CD8-positive, alpha-beta T cell (primary cell): ENCODE measurements at regions of chr19 and their contacts with region 1.

Region 1: GRCh38 chr19:40744554-40745401 is 5.5 kb downstream of the ACTMAP start:
- DNase-seq: peak in 6 of 9 experiments; percentile 30 to 60 (median 47)
- ATAC-seq: peak; percentile 49
- H3K4me3 ChIP-seq: no peak overlapping the region
- H3K4me3 Mint-ChIP-seq: no peak overlapping the region
- H3K27ac ChIP-seq: no peak overlapping the region
- H3K27ac Mint-ChIP-seq: no peak overlapping the region
- H3K4me1 ChIP-seq: peaks cover 4% of the 10 kb centered on the region
- H3K4me1 Mint-ChIP-seq: peaks cover 7% of the 10 kb centered on the region
- H3K27me3 ChIP-seq: no peaks in the 10 kb centered on the region
- H3K27me3 Mint-ChIP-seq: no peaks in the 10 kb centered on the region
- CTCF ChIP-seq: no peak

Region 2: GRCh38 chr19:40813182-40813958 is 68.6 kb after region 1 on chr19:
- CTCF ChIA-PET with region 1: interaction called, 14 read pairs
- POLR2A ChIA-PET with region 1: no interaction called
- intact Hi-C with region 1: no loop called
- DNase-seq: no peak
- ATAC-seq: no peak
- H3K4me3 ChIP-seq: no peak overlapping the region
- H3K4me3 Mint-ChIP-seq: no peak overlapping the region
- H3K27ac ChIP-seq: no peak overlapping the region
- H3K27ac Mint-ChIP-seq: peak overlapping the region; percentile 49
- H3K4me1 ChIP-seq: peaks cover 35% of the 10 kb centered on the region
- H3K4me1 Mint-ChIP-seq: peaks cover 38% of the 10 kb centered on the region
- H3K27me3 ChIP-seq: no peaks in the 10 kb centered on the region
- H3K27me3 Mint-ChIP-seq: no peaks in the 10 kb centered on the region
- CTCF ChIP-seq: no peak